ENCODE measurements at regions of chr3 and their contacts with region 1.

Region 1: DNA sequence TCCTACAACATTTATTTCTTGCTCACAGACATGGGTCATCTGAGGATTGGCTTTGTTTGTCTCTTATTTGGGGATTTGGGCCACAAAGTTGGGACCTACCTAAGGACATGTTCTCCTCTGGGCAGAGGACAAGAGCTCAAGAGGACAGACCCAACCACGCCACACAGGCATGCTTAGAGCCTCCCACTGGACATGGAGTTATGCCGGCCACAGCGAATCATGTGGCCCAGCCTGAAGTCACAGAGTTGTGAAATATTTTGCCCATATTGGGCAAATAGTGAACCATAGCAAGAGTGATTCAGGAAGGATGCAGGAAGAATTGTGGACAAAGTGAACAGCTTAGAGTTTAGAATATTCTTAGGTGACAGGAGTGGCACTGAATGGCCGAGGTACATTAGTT is 9.9 kb downstream of the TRAK1 start:
- DNase-seq: peak; percentile 67
- ATAC-seq: peak; percentile 68

Region 2: GRCh38 chr3:41893977-41894376 is 207.1 kb before region 1 on chr3:
- intact Hi-C with region 1: loop called (anchors 10 kb)
- DNase-seq: no peak
- ATAC-seq: no peak

Region 3: DNA sequence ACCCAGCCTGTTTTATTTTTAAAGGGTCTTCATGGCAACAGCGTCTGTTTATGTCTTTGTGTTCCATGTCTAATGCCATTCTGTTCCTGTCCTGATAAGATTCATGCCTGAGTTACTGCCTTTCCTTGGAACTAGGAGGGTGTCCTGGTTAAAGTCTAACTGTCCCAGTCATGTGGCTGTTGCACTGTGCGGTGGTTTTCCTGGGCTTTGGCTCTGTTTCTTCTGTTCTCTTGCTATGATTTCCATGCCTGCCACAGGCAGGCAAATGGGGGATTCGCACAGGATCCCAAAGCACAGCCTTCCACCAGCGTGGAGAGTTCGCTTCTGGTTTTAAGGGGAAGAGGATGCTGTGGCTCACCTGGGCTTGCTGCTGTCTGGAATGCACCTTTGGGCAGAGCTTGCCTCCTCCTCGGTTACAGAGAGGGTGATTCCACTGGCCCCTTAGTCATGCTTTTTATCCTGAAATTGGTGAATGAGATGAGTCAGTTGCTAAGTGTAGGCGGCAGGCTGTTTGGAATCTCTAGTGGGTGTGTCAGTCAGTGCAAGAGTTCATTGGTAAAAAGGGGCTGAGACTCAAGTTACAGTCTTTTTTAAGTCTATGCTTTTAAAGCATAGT is 78.2 kb after region 1 on chr3:
- intact Hi-C with region 1: no loop called
- DNase-seq: no peak
- ATAC-seq: peak; percentile 84

Region 4: DNA sequence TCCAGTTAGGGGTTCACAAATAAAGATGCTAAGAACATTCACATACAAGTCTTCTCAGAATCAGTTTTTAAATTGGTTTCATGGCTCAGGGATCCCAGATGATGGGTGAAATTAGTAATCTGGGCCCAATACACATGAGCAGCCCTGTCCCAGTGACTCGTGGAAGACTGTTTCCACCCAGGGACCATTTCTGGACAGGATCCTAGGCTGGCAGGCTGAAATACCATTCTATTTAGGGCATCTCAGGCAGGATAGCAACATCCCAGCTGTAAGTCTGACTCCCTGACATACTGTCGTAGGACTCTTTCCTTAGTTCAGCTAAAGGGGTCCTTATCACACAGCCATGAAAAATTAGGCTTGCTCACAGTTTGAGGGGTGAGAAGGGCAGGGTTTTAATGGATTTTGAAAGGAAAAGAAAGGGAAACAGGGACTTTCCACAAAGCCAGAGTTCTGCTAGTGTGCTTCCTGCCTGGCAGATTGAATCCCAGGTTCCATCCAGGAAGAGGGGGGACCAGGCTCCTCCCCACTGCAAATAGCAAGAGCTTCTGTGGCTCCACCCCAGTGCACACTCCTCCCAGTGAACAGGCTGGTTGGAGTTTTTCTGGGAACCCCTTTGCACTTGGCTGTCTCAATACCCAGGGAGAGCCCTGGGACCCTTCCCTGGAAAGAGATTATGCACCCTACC is 350.6 kb after region 1 on chr3:
- intact Hi-C with region 1: no loop called
- DNase-seq: peak; percentile 32
- ATAC-seq: peak; percentile 97